ENCODE measurements at regions of chr14 and their contacts with region 1.

Region 1: DNA sequence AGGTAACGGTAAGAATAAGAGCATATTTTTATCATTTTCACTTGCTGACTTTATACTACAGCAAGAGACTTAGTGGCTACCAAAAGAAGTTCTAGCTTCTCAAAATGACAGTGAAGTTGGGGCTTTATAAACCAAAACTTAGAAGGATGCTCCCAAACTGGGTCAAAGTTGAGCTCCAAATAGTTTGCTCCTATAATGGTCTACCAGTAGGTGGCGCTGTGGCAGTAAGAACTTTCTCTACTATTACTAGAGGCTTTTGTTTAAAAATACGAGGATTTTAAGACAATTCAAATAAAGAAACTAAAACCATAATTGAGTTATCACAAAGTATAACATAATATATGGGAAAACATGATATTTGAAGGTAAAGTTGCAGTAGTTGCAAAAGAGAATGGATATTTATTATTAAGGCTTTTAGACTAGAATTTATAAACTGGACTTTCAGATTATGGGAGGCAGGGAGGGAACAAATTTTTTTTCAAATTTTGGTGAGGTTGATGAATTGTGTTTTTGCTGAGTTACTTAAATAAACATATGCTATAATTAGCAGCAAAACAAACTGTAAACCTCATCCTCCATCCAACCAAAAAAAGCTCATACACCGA is 75.0 kb downstream of the TGFB3 start:
- DNase-seq: peak; percentile 53
- H3K4me3 ChIP-seq: no peak overlapping the region
- H3K27ac ChIP-seq: no peak overlapping the region
- H3K4me1 ChIP-seq: no peaks in the 10 kb centered on the region
- H3K27me3 ChIP-seq: no peaks in the 10 kb centered on the region
- CTCF ChIP-seq: peak; percentile 78 to 94 (median 82)
- POLR2A ChIP-seq: no peak

Region 2: GRCh38 chr14:75709207-75709812 is 197.5 kb before region 1 on chr14:
- intact Hi-C with region 1: loop called (anchors 10 kb)
- DNase-seq: peak; percentile 83
- H3K4me3 ChIP-seq: no peak overlapping the region
- H3K27ac ChIP-seq: no peak overlapping the region
- H3K4me1 ChIP-seq: peaks cover 3% of the 10 kb centered on the region
- H3K27me3 ChIP-seq: no peaks in the 10 kb centered on the region
- CTCF ChIP-seq: peak; percentile 45 to 84 (median 80)
- POLR2A ChIP-seq: no peak

Region 3: DNA sequence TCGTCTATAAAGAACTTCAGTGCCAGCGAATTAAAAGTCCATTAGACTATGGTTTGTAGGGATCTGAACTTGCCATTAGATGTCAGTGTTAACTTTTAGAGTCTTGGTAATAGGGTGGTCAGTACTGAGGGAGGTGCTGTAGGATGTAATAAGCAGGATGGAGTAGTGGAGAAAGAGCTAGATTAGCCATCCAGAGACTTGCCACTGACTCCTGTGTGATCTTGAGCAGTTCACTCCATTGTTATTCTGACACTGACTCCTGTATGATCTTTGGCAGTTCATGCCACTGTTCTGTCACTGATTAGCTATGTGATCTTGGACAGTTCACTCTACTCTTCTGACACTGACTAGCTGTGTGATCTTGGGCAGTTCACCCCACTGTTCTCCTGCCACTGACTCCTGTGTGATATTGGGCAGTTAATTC is 112.2 kb before region 1 on chr14:
- intact Hi-C with region 1: loop called (anchors 10 kb)
- DNase-seq: no peak
- H3K4me3 ChIP-seq: no peak overlapping the region
- H3K27ac ChIP-seq: no peak overlapping the region
- H3K4me1 ChIP-seq: no peaks in the 10 kb centered on the region
- H3K27me3 ChIP-seq: no peaks in the 10 kb centered on the region
- CTCF ChIP-seq: peak in 3 of 4 experiments; percentile 50 to 61 (median 55)
- POLR2A ChIP-seq: no peak

Region 4: DNA sequence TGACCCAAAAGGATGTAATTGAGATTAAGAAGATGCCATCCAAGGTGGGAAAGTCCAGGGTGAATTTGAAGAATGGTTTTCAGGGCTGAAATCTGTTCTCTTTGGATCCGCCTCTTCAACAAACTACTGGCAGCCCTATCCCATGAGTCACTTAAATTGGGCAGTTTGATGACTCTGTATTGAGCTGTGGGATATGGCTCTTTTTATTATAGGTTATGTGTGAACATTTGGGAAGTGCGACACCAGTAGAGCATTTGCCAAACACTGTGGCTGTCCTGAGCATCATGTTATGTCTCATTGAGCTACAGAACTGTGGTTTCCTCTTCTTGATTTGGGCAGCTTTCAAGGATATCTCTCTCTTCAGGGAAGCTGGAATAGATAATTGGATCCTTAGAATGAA is 101.1 kb after region 1 on chr14:
- intact Hi-C with region 1: no loop called
- DNase-seq: no peak
- H3K4me3 ChIP-seq: no peak overlapping the region
- H3K27ac ChIP-seq: no peak overlapping the region
- H3K4me1 ChIP-seq: no peaks in the 10 kb centered on the region
- H3K27me3 ChIP-seq: no peaks in the 10 kb centered on the region
- CTCF ChIP-seq: no peak
- POLR2A ChIP-seq: no peak

Region 5: DNA sequence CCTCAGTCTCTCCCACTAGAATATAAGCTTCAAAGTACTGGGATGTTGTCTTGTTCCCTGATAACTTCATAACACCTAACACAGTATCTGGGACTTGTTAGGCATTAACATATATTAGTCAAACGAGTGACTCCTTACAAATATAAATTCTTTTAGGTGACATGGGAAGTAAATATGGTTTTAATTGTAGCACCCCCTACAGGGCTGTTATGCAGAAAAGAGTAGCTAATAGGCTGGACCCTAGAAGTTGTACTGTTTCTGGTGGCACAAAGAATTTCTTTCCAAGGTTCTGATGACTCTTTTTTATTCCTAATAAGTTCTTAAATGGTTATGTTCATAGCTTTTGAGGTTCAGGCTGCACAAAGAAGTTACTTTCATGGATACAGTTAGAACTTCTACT is 274.8 kb after region 1 on chr14:
- intact Hi-C with region 1: no loop called
- DNase-seq: no peak
- H3K4me3 ChIP-seq: no peak overlapping the region
- H3K27ac ChIP-seq: no peak overlapping the region
- H3K4me1 ChIP-seq: no peaks in the 10 kb centered on the region
- H3K27me3 ChIP-seq: no peaks in the 10 kb centered on the region
- CTCF ChIP-seq: no peak
- POLR2A ChIP-seq: no peak

Region 6: GRCh38 chr14:76352639-76353281 is 446.0 kb after region 1 on chr14:
- intact Hi-C with region 1: loop called (anchors 10 kb)
- DNase-seq: peak; percentile 20
- H3K4me3 ChIP-seq: peak overlapping the region in 1 of 2 donors; percentile 16
- H3K27ac ChIP-seq: no peak overlapping the region
- H3K4me1 ChIP-seq: no peaks in the 10 kb centered on the region
- H3K27me3 ChIP-seq: no peaks in the 10 kb centered on the region
- CTCF ChIP-seq: peak; percentile 54 to 79 (median 73)
- POLR2A ChIP-seq: no peak

Measured in prostate gland (tissue), 2 donors.